AG04450 (cell line): ENCODE measurements at regions of chr1 and their contacts with region 1.

Region 1: DNA sequence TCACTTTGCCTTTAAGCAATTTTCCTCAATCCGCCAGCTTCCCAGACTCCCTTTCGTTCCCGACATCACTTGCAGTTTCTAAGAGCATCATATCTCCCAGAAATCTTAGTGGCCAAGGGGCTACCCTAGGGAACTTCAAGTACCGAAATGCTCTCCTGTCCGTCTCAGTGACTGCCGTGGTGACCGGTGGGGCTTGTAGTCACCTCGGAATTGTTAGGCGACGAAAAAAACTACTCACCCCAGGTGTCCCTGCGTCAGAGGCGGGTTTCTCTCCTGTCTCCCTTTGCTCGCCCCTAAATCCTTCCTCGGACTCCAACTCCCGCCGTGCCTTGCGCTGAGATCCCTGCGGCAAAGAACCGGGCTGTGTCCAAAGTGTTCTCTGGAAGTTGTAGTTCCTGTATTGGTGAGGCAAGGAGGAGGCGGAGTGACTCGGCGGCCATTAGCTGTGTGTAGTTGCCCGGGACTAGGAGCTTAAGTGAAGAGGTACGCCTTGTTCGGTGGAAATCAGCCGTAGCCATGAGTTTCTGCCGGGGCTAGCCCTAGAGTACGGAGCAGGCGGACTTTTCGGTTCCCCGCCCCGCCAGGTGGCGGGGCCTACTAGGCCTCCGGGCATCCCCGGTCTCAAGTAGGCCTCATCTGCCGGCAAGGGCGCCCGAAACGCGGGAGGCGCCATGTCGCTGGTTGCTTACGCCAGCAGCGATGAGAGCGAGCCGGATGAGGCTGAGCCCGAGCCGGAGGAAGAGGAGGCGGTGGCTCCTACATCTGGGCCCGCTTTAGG is at the start of gene PRCC:
- DNase-seq: peak; percentile 100
- H3K4me3 ChIP-seq: peak within 1 kb of the TSS; percentile 95
- H3K27ac ChIP-seq: peak within 1 kb of the TSS; percentile 77
- H3K27me3 ChIP-seq: no peaks in the 10 kb centered on the region
- CTCF ChIP-seq: no peak
- polyA plus RNA-seq, gene PRCC: 51.1 and 58.6 TPM in 2 replicates

Region 2: DNA sequence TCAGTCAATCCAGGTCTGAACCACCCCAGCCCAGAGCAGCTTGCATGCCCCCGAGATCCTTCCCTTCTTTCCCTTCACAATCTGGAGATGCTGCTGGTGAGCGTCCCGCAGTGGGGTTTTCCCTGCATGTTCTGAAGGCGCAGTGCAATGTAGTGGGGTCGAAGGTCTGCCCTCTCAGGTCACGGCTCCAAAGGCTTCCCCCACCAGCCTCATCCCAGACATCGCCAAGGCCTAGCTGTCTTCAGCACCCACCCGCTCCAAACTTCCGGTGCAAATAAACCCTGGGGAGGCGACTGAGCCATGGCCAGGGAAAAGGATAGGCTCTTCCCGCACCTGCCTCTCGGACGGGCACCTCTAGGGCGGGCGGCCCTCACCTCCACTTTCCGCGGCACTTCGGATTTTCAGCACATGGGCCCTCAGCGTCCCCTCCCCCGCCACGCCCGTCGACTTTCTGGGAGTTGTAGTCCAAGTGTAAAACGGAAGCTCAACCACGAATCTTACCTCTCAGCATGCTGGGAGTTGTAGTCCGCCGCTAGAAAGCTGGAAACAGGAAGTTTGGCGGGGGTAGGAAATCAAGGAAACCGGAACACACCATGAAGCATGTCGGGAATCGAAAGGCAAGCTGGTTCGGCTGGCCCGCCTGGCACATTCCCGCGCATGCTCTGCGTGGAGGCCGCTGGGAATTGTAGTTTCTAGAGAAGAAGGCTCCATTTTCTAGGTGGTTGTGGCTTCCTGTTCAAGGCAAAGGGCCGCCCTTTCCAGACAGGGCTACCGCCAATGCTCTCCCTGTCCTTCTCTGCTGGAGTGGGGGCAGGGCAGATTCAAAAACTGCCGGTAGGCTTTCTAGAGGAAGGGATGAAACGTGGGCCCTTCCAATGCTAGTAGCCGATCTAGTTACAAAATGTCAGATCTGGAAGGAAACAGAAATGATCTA is 26.3 kb before region 1 on chr1 and contains the start of gene MRPL24:
- CTCF ChIA-PET with region 1: no interaction called
- POLR2A ChIA-PET with region 1: interaction called, 17 read pairs
- DNase-seq: peak; percentile 98
- H3K4me3 ChIP-seq: peak within 1 kb of the TSS; percentile 94
- H3K27ac ChIP-seq: peak within 1 kb of the TSS; percentile 75
- H3K27me3 ChIP-seq: no peaks in the 10 kb centered on the region
- CTCF ChIP-seq: no peak
- polyA plus RNA-seq, gene MRPL24: 65.5 and 80.4 TPM in 2 replicates

Region 3: GRCh38 chr1:156788136-156788535 is 20.8 kb after region 1 on chr1:
- CTCF ChIA-PET with region 1: no interaction called
- POLR2A ChIA-PET with region 1: no interaction called
- DNase-seq: no peak
- H3K4me3 ChIP-seq: no peak overlapping the region
- H3K27ac ChIP-seq: no peak overlapping the region
- H3K27me3 ChIP-seq: no peaks in the 10 kb centered on the region
- CTCF ChIP-seq: no peak